ENCODE measurements at regions of chr3 and their contacts with region 1.

Region 1: DNA sequence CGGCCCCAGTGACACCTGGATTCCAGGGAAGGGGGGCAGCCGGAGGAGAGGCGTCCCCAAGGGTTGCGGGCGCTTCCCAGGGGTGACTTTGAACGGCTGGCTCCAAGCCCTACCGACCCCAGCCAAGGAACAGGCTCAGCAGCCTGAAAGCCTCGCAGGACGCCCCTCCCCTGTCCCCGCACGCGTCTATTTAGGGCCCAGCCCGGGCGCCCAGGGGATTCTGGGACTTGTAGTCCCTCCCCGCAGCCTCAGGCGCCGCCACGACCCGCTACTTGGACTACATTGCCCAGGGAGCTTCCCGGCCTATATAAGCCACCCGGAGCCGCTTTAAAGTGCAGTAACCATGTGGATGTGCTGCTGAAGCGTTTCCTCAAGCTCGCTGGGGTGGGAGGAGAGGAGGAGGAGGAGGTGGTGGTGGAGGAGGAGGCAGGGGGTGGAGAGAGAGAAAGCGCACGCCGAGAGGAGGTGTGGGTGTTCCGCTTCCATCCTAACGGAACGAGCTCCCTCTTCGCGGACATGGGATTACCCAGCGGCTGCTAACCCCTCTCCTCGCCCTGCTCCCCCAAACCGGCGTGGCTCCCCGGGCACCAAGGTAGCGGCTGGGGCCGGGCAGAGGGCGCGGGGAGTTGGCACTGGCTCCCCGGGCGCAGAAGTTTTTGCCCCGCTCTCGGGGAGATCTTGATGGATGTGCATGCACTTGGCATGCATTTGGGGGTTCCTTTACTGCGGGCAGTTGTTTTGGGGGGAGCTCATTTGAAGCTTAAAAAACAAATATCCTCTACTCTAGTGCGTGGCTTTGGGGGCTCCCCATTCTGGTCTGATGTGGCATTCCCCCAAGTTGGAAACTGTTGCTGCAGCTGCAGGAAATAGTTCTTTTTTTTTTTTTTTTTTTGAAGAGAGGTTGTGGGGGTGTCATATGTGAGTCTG is at the start of gene ITPR1:
- DNase-seq: peak; percentile 96
- H3K4me3 ChIP-seq: peak within 1 kb of the TSS; percentile 92 to 96
- H3K27ac ChIP-seq: peak within 1 kb of the TSS; percentile 39 to 92; a peak in 3 of 4 replicates
- H3K4me1 ChIP-seq: peaks cover 0 to 21% of the 10 kb centered on the region in 2 experiments; a peak in 2 of 4 replicates
- H3K27me3 ChIP-seq: no peaks in the 10 kb centered on the region
- CTCF ChIP-seq: no peak
- EP300 ChIP-seq: 0 out of 4 replicates have a peak, but pooled peaks of 1 of the 2 experiments have one; percentile 7
- RAD21 ChIP-seq: peak; percentile 44
- polyA plus RNA-seq, gene ITPR1: 5.9 and 8.0 TPM in 2 replicates

Region 2: GRCh38 chr3:4251412-4251811 is 241.9 kb before region 1 on chr3:
- CTCF ChIA-PET with region 1: no interaction called
- POLR2A ChIA-PET with region 1: no interaction called
- DNase-seq: no peak
- H3K4me3 ChIP-seq: no peak overlapping the region
- H3K27ac ChIP-seq: no peak overlapping the region
- H3K4me1 ChIP-seq: no peaks in the 10 kb centered on the region
- H3K27me3 ChIP-seq: no peaks in the 10 kb centered on the region
- CTCF ChIP-seq: no peak
- EP300 ChIP-seq: no peak
- RAD21 ChIP-seq: no peak

Region 3: GRCh38 chr3:4466741-4467521 is 26.3 kb before region 1 on chr3 and contains the start of gene SUMF1:
- CTCF ChIA-PET with region 1: interaction called, 6 read pairs
- POLR2A ChIA-PET with region 1: interaction called, 17 read pairs
- DNase-seq: peak; percentile 96
- H3K4me3 ChIP-seq: peak within 1 kb of the TSS; percentile 81 to 99
- H3K27ac ChIP-seq: peak within 1 kb of the TSS; percentile 11 to 71; a peak in 3 of 4 replicates
- H3K4me1 ChIP-seq: peaks cover 0 to 4% of the 10 kb centered on the region in 2 experiments; a peak in 1 of 4 replicates
- H3K27me3 ChIP-seq: no peaks in the 10 kb centered on the region
- CTCF ChIP-seq: no peak
- EP300 ChIP-seq: peak in 1 of 2 experiments; percentile 52; a peak in 1 of 4 replicates
- RAD21 ChIP-seq: no peak
- polyA plus RNA-seq, gene SUMF1: 56.9 and 74.9 TPM in 2 replicates

Region 4: DNA sequence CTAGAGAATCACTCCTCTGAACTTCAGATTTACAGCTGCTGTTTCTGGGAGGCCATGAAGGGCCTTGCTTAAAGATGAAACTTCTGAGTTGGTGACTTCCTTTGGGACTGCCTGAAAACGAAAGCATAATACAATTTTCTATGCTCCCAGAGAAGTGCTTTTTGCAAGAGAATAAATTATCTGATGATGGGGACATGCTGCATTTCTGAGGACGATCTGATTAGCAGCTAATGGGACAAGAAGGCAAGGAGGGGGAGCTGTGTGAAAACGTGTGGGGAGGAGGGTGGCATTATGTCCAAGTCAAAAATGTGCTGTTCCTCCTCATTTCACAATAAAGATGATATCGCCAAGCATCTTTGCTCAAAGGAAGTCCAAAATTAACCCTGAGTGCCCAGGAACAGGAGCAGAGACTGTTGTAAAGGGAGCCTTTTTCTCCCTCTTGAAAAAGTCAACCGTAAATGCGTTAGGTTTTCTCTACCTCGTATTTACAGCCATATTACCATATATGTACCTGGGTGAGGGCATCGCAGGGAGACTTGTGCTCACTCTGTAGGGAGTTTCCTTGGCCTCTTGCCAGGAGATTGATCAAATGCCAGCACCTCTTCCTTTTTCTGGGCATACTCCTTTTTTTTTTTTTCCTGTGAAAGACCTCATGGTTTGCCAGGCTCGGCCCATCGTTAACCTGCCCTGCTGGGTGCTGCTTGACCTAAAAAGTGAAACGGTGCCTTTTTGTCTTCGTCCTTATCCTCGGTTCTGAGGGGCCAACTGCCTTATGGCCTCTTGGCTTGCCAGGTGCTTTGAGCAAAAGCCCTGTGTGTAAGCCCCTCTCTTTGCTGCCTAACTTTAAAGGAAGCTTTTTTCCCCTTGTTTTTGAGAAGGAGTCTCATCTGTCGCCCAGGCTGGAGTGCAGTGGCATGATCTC is 11.3 kb after region 1 on chr3:
- CTCF ChIA-PET with region 1: interaction called, 28 read pairs
- POLR2A ChIA-PET with region 1: interaction called, 49 read pairs
- DNase-seq: peak; percentile 61
- H3K4me3 ChIP-seq: peak overlapping the region; percentile 15 to 55; a peak in 3 of 4 replicates
- H3K27ac ChIP-seq: peak overlapping the region; percentile 39 to 89; a peak in 3 of 4 replicates
- H3K4me1 ChIP-seq: peaks cover 9 to 54% of the 10 kb centered on the region in 2 experiments; a peak in 2 of 4 replicates
- H3K27me3 ChIP-seq: no peaks in the 10 kb centered on the region
- CTCF ChIP-seq: no peak
- EP300 ChIP-seq: peak in 1 of 2 experiments; percentile 84; a peak in 2 of 4 replicates
- RAD21 ChIP-seq: peak; percentile 18

Region 5: DNA sequence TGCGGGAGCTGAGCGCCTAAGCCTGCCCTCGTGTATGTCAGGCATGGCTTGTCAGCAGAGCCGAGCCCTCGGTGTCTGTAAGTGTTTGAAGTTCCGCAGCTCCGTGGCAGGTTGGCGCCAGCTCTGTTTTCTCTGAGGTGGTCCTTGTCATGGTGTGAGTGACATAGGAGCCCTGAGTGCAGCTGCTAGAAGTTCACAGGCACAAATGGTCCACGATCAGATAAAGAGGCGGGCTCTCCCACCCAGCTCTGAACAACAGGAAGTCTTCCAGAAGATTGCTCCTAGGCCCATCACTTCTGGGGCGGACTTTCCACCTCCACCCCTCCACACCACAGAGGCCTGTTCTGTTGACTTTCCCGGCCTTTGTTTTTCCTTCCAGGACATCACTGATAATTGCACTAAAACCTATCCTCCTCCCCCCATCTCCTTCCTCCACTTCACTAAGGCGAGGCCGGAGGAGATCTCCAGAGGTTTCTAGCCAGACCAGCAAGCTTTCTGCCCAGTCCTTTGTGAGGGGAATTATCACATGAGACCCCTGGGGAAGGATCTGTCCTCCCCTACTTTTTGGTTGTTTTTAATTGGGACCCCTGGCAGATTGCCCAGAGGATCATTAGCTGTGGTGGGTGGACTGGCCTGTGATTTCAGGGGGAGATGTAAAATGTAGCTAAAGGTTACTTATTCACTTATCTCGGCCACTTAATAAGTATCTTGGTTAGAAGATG is 19.8 kb after region 1 on chr3:
- CTCF ChIA-PET with region 1: interaction called, 5 read pairs
- POLR2A ChIA-PET with region 1: interaction called, 22 read pairs
- DNase-seq: peak; percentile 51
- H3K4me3 ChIP-seq: no peak overlapping the region
- H3K27ac ChIP-seq: peak overlapping the region in 1 of 2 experiments; percentile 89; a peak in 2 of 4 replicates
- H3K4me1 ChIP-seq: peaks cover 0 to 45% of the 10 kb centered on the region in 2 experiments; a peak in 2 of 4 replicates
- H3K27me3 ChIP-seq: no peaks in the 10 kb centered on the region
- CTCF ChIP-seq: no peak
- EP300 ChIP-seq: no peak
- RAD21 ChIP-seq: no peak

Region 6: GRCh38 chr3:4524088-4525023 is 31.1 kb after region 1 on chr3:
- CTCF ChIA-PET with region 1: interaction called, 3 read pairs
- POLR2A ChIA-PET with region 1: interaction called, 24 read pairs
- DNase-seq: peak; percentile 50
- H3K4me3 ChIP-seq: peak overlapping the region in 1 of 2 experiments; percentile 4; a peak in 1 of 4 replicates
- H3K27ac ChIP-seq: peak overlapping the region; percentile 62 to 97
- H3K4me1 ChIP-seq: peaks cover 6 to 42% of the 10 kb centered on the region in 2 experiments; a peak in 2 of 4 replicates
- H3K27me3 ChIP-seq: no peaks in the 10 kb centered on the region
- CTCF ChIP-seq: no peak
- EP300 ChIP-seq: peak; percentile 84 to 97; a peak in 3 of 4 replicates
- RAD21 ChIP-seq: peak; percentile 43; the same call in 1 of the 2 replicates

Region 7: GRCh38 chr3:4680881-4681300 is 187.6 kb after region 1 on chr3:
- CTCF ChIA-PET with region 1: no interaction called
- POLR2A ChIA-PET with region 1: no interaction called
- DNase-seq: no peak
- H3K4me3 ChIP-seq: no peak overlapping the region
- H3K27ac ChIP-seq: no peak overlapping the region; a peak in 1 of 4 replicates
- H3K4me1 ChIP-seq: peaks cover 0 to 7% of the 10 kb centered on the region in 2 experiments; a peak in 1 of 4 replicates
- H3K27me3 ChIP-seq: no peaks in the 10 kb centered on the region
- CTCF ChIP-seq: no peak
- EP300 ChIP-seq: no peak
- RAD21 ChIP-seq: no peak

Measured in SK-N-SH (cell line).